ENCODE measurements at regions of chr1 and their contacts with region 1.

Region 1: GRCh38 chr1:110338886-110339406 is at the start of gene RBM15:
- DNase-seq: peak; percentile 97
- ATAC-seq: peak; percentile 83
- H3K4me3 Mint-ChIP-seq: no peak within 1 kb of the TSS
- H3K27ac Mint-ChIP-seq: no peak within 1 kb of the TSS
- H3K4me1 Mint-ChIP-seq: peaks cover 48% of the 10 kb centered on the region
- H3K27me3 Mint-ChIP-seq: no peaks in the 10 kb centered on the region
- total RNA-seq, gene RBM15: 60.7 to 63.2 TPM

Region 2: GRCh38 chr1:109426278-109427170 is 912.4 kb before region 1 on chr1 and contains the start of gene PSMA5:
- CTCF ChIA-PET with region 1: no interaction called
- POLR2A ChIA-PET with region 1: interaction called, 3 read pairs
- intact Hi-C with region 1: loop called (anchors 2 to 5 kb)
- DNase-seq: peak; percentile 97
- ATAC-seq: peak; percentile 97
- H3K4me3 Mint-ChIP-seq: peak within 1 kb of the TSS; percentile 91
- H3K27ac Mint-ChIP-seq: peak within 1 kb of the TSS; percentile 96
- H3K4me1 Mint-ChIP-seq: peaks cover 34% of the 10 kb centered on the region
- H3K27me3 Mint-ChIP-seq: no peaks in the 10 kb centered on the region
- total RNA-seq, gene PSMA5: 151 to 249 TPM

Region 3: GRCh38 chr1:109687616-109688499 is 651.1 kb before region 1 on chr1 and contains the start of gene GSTM1:
- CTCF ChIA-PET with region 1: no interaction called
- POLR2A ChIA-PET with region 1: no interaction called
- intact Hi-C with region 1: loop called in 1 of 2 experiments (anchors 2 kb)
- DNase-seq: peak; percentile 94
- ATAC-seq: peak; percentile 99
- H3K4me3 Mint-ChIP-seq: peak within 1 kb of the TSS; percentile 88
- H3K27ac Mint-ChIP-seq: peak within 1 kb of the TSS; percentile 96
- H3K4me1 Mint-ChIP-seq: peaks cover 20% of the 10 kb centered on the region
- H3K27me3 Mint-ChIP-seq: no peaks in the 10 kb centered on the region
- total RNA-seq, gene GSTM1: 94.0 to 116 TPM

Region 4: DNA sequence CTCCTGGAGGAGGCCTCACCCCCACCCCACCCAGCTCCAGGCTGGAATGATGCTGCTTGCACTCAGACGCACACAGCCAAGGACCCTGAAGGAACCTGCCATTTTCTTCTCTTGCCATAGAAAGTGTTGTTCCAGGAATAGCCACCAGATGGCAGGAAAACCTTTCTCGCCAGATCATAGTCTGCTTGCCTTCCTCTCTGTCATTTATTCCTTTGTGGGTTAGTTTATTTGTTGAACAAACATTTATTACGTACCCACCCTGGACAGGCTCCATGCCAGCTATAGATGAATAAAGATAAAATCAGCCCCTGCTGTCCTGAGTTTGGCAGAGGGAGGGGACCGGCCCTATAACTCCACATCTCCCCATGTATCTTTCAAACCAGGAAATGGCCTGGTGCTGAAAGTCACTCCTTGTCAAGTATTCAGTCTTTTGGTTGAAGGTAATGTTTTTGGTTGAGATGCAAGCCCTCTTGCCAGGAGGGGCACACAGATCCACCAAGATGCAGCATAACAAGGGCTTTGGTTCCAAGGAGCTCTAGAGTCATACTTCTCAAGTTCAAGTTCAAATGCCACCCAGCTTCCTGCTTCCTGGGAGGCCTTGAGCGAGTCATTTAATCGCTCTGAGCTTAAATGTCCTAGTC is 135.8 kb before region 1 on chr1:
- CTCF ChIA-PET with region 1: interaction called, 137 read pairs
- POLR2A ChIA-PET with region 1: interaction called, 35 read pairs
- intact Hi-C with region 1: no loop called
- DNase-seq: peak; percentile 82
- ATAC-seq: peak; percentile 63
- H3K4me3 Mint-ChIP-seq: no peak overlapping the region
- H3K27ac Mint-ChIP-seq: peak overlapping the region; percentile 79
- H3K4me1 Mint-ChIP-seq: peaks cover 15% of the 10 kb centered on the region
- H3K27me3 Mint-ChIP-seq: no peaks in the 10 kb centered on the region

Region 5: DNA sequence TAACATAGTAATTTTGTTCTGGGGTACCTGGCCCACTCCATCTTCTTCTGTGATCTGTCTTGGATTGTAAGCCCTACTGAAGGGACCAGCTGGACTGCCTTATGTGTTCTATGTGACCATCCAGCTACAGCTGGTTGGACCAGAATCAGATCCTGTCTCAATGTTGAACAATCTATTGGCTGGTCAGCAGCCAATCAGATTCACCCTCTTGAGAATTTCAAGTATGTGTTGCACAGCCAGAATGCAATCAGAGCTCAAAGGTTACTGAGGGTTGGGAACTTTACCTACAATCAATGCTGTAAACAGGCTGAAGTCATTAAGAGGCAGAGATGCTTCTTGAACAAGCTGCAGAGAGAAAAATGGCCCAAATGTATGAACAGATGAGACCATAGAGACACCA is 66.9 kb before region 1 on chr1:
- CTCF ChIA-PET with region 1: no interaction called
- POLR2A ChIA-PET with region 1: no interaction called
- intact Hi-C with region 1: no loop called
- DNase-seq: no peak
- ATAC-seq: no peak
- H3K4me3 Mint-ChIP-seq: no peak overlapping the region
- H3K27ac Mint-ChIP-seq: no peak overlapping the region
- H3K4me1 Mint-ChIP-seq: no peaks in the 10 kb centered on the region
- H3K27me3 Mint-ChIP-seq: peaks cover 3% of the 10 kb centered on the region

Region 6: DNA sequence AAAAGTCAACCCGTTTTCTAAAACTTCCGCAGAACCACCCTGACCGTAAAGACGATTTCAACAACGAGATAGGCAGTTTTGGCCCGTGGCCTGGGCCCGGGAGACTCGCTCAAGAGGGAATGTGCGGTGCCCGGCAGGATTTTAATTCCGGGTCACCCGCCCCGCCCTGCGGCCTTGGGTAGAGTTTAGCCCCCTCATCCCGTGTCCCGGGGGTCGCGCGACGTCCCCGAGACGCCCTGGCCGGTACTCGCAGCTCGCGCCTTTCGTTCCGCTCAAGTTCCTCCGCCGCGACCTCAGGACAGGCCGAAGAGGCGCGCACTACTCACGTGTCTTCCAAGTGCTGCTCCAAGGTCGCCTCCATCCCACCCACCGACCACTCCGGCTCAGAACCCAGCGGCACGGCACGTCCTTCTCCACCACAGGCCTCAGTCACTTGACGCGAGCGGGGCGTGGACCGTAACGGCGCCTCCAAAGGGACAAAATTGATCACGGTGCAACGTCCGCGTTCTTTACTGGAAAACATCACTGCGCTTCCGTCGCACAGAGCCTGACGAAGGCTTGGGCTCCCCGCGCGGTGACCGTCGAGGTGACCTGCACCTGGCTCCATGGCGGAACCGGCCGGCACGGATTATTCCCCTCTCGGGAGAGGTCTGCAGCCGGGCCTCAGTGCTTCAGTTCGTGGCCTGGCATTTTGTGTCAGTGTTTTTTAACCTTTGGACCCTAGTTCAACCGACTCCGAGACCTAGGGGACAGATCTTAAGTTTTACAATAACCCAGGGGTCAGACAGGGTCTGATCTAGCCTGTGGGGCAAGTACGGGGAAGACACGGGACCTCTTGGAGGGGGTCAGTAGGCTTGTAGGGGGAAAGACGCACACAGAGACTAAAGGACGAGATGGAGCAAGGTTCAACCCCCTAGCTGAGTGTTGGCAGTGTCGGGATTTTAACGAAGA is 68.6 kb after region 1 on chr1 and contains the start of gene LAMTOR5:
- CTCF ChIA-PET with region 1: interaction called, 12 read pairs
- POLR2A ChIA-PET with region 1: interaction called, 15 read pairs
- intact Hi-C with region 1: loop called (anchors 1 kb)
- DNase-seq: peak; percentile 95
- ATAC-seq: peak; percentile 93
- H3K4me3 Mint-ChIP-seq: peak within 1 kb of the TSS; percentile 98
- H3K27ac Mint-ChIP-seq: peak within 1 kb of the TSS; percentile 100
- H3K4me1 Mint-ChIP-seq: peaks cover 17% of the 10 kb centered on the region
- H3K27me3 Mint-ChIP-seq: no peaks in the 10 kb centered on the region
- total RNA-seq, gene LAMTOR5: 141 to 155 TPM

Region 7: GRCh38 chr1:110674337-110675059 is 335.6 kb after region 1 on chr1 and contains the start of gene KCNA3:
- CTCF ChIA-PET with region 1: no interaction called
- POLR2A ChIA-PET with region 1: interaction called, 6 read pairs
- intact Hi-C with region 1: loop called in 1 of 2 experiments (anchors 1 kb)
- DNase-seq: peak; percentile 74
- ATAC-seq: peak; percentile 9
- H3K4me3 Mint-ChIP-seq: peak within 1 kb of the TSS; percentile 99
- H3K27ac Mint-ChIP-seq: peak within 1 kb of the TSS; percentile 99
- H3K4me1 Mint-ChIP-seq: peaks cover 34% of the 10 kb centered on the region
- H3K27me3 Mint-ChIP-seq: no peaks in the 10 kb centered on the region
- total RNA-seq, gene KCNA3: 20.0 to 20.5 TPM

Region 8: DNA sequence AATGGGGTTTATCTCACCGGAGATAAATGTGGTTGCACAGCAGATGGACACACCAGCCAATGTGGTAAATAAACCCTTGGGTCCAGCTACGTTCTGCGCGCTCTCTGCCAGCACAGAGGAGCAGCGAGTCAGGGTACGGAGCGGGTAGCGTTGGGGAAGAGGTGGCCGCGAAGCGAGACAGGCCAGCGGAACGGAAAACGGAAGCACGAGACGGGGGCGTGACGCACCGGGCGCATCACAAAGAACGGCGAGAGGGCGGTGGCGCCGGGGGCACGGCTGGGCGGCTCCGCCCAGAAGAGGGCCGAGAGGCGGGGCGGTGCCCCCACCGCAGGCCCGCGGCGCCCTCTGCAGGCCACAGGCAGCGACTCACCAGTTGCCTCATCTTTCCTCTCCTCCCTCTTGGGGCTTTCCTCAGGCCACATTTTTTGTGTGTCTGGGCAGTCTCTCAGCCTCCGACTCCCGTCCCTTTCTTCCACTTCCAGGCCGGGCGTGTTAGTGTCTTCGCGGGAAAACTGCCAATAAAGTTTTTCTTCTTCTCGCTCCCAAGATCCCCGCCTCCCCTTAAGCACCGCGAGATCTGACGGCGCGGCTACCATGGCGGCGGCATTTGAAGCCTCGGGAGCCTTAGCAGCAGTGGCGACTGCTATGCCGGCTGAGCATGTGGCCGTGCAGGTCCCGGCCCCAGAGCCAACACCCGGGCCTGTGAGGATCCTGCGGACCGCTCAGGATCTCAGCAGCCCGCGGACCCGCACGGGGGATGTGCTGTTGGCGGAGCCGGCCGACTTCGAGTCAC is 1416.6 kb after region 1 on chr1 and contains the start of gene DDX20:
- CTCF ChIA-PET with region 1: no interaction called
- POLR2A ChIA-PET with region 1: no interaction called
- intact Hi-C with region 1: loop called in 1 of 2 experiments (anchors 2 kb)
- DNase-seq: peak; percentile 97
- ATAC-seq: peak; percentile 90
- H3K4me3 Mint-ChIP-seq: peak within 1 kb of the TSS; percentile 83
- H3K27ac Mint-ChIP-seq: peak within 1 kb of the TSS; percentile 98
- H3K4me1 Mint-ChIP-seq: peaks cover 35% of the 10 kb centered on the region
- H3K27me3 Mint-ChIP-seq: no peaks in the 10 kb centered on the region
- total RNA-seq, gene DDX20: 13.5 to 13.6 TPM

Measured in activated CD4-positive, alpha-beta T cell treated with anti-CD3 and anti-CD28 coated beads for 36 hours (primary cell).